ENCODE measurements at regions of chr5 and their contacts with region 1.

Region 1: GRCh38 chr5:109053995-109054417 is 306.3 kb downstream of the FER start:
- DNase-seq: no peak
- H3K4me3 Mint-ChIP-seq: no peak overlapping the region
- H3K27ac Mint-ChIP-seq: no peak overlapping the region
- H3K4me1 Mint-ChIP-seq: no peaks in the 10 kb centered on the region
- H3K27me3 Mint-ChIP-seq: no peaks in the 10 kb centered on the region
- CTCF ChIP-seq: no peak

Region 2: GRCh38 chr5:108942701-108943100 is 111.3 kb before region 1 on chr5:
- CTCF ChIA-PET with region 1: no interaction called
- intact Hi-C with region 1: no loop called
- DNase-seq: no peak
- H3K4me3 Mint-ChIP-seq: no peak overlapping the region
- H3K27ac Mint-ChIP-seq: no peak overlapping the region
- H3K4me1 Mint-ChIP-seq: no peaks in the 10 kb centered on the region
- H3K27me3 Mint-ChIP-seq: no peaks in the 10 kb centered on the region
- CTCF ChIP-seq: no peak

Region 3: GRCh38 chr5:109089191-109089590 is 35.2 kb after region 1 on chr5:
- CTCF ChIA-PET with region 1: interaction called, 14 read pairs
- intact Hi-C with region 1: no loop called
- DNase-seq: no peak
- H3K4me3 Mint-ChIP-seq: no peak overlapping the region
- H3K27ac Mint-ChIP-seq: no peak overlapping the region
- H3K4me1 Mint-ChIP-seq: no peaks in the 10 kb centered on the region
- H3K27me3 Mint-ChIP-seq: no peaks in the 10 kb centered on the region
- CTCF ChIP-seq: no peak